Right ventricle myocardium superior (tissue), 1 donor: ENCODE measurements at regions of chr6 and their contacts with region 1.

Region 1: DNA sequence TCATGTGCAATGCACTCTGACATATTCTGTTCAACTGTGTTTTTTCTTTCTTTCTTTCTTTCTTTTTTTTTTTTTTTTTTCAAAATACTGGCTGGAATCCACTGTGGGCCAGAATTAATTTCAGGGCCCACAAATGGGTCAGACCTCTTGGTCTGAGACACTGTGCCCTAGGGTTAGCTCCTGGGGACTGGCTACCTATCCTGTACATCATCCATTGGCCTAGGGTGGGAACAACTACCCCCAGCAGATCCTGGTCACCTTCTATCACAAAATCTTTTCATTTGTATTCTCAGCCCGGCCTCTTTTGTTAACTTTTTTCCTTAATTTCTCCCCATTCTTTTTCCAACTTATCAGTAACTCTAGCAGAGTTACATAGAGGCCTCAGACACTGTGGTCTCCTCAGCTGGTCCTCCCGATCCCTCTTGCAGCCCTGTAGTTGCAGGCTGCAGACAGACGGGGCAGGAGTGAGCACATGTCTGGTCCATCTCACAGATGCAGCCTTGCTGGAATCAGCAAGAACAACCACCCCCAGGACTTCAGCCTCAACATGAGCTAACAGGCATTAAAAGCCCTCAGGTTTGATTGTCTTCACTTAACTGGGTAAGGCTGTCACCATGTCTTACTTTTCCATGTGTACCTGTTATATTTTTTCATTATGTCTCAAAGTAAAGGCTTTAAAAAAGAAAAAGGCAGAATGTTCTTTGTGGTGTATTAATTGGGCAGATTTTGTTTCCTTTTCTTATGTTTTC is 41.3 kb downstream of the TXLNB start:
- DNase-seq: peak; percentile 70
- ATAC-seq: peak; percentile 90

Region 2: GRCh38 chr6:139134817-139135581 is 115.5 kb before region 1 on chr6 and contains the start of gene HECA:
- intact Hi-C with region 1: no loop called
- DNase-seq: peak; percentile 99
- ATAC-seq: peak; percentile 92
- total RNA-seq, gene HECA: 54.2 TPM

Region 3: GRCh38 chr6:139204978-139205377 is 45.5 kb before region 1 on chr6:
- intact Hi-C with region 1: no loop called
- DNase-seq: no peak
- ATAC-seq: no peak

Region 4: DNA sequence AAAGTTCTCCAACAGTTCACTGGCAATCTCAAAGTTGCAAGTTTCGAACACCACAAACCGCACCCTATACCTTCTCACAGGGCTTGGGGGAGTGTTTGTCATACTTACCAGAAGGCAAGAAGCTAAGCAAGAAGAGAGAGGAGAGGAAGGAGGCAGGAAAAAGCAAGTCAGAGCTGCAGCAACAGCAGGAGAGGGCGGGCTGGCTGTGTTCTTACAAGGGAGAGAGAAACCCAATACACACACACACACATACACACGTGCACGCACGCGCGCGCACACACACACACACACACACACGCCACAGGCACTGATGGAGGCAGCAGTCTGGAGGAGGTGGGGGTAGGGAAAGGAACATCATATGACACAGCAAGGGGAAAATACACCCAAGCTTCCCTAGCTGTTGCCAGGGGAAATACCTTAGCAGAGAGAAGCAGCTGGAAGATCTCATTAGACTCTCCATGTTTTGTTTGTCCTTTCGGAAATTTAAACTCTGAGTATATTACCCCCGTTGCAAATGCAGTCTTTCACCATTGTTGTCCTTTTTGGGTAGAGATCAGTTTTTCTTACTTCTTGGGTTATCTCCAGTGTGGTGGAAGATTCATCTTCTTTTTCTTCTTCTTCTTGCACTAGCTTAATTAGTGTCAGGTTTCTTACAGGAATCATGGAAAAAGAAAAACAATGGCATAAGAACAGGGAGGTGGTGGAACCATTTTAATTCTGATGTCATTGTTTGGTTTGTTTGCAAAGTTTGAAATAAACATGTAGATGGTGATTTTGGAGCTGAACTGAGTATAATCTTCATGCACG is 41.5 kb after region 1 on chr6 and contains the start of gene TXLNB:
- intact Hi-C with region 1: loop called (anchors 5 kb)
- DNase-seq: peak; percentile 90
- ATAC-seq: peak; percentile 84
- total RNA-seq, gene TXLNB: 125 TPM